ENCODE measurements at regions of chr1 and their contacts with region 1.

Region 1: GRCh38 chr1:59432531-59433439 is 135.9 kb downstream of the FGGY start:
- DNase-seq: no peak
- H3K4me3 Mint-ChIP-seq: no peak overlapping the region
- H3K27ac Mint-ChIP-seq: peak overlapping the region; percentile 83
- H3K4me1 Mint-ChIP-seq: peaks cover 47% of the 10 kb centered on the region
- H3K27me3 Mint-ChIP-seq: no peaks in the 10 kb centered on the region

Region 2: GRCh38 chr1:59007820-59008598 is 424.8 kb before region 1 on chr1:
- intact Hi-C with region 1: loop called (anchors 5 kb)
- DNase-seq: no peak
- H3K4me3 Mint-ChIP-seq: no peak overlapping the region
- H3K27ac Mint-ChIP-seq: peak overlapping the region; percentile 85
- H3K4me1 Mint-ChIP-seq: peaks cover 55% of the 10 kb centered on the region
- H3K27me3 Mint-ChIP-seq: no peaks in the 10 kb centered on the region

Region 3: DNA sequence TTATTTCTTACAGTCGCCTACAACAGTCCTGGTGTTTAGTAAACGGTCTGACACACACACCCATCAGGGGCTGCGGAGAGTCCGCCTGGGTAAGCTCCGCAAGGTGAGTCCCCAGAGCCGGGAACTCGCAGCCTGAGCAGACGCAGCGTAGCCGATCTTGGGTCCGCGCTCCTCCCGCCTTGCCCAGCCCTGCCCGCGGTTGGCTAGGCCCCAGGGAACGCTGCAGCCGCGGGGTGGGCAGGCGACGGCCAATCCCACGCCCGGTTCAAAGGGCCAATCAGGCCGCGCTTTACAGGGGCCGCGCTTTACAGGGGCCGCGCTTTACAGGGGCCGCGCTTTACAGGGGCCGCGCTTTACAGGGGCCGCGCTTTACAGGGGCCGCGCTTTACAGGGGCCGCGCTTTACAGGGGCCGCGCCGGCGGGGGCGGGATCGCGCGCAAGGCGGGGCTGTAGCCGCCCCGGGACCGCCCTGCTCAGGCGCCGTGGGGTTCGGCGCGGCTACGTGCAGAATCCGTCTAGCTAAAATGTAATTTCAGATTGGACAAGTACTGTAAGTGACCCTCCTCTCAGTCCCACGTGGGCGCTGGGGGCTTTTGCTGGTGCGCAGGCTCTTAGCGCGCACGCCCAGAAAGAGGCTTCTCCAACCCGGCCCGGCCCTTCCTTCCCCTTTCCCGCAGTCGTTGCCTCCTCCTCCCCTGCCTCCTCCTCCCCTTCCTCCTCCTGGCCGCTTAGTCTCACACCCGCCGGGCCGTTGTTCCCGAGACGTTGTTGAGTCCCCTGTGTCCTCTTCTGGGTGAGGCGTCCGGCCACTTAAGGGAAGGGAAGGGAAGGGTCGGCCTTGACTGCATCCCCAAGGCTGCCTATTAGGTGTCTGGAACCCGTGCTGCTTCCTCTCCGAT is 136.2 kb before region 1 on chr1 and contains the start of gene FGGY:
- intact Hi-C with region 1: loop called (anchors 1 kb)
- DNase-seq: peak; percentile 85
- H3K4me3 Mint-ChIP-seq: peak within 1 kb of the TSS; percentile 93
- H3K27ac Mint-ChIP-seq: peak within 1 kb of the TSS; percentile 88
- H3K4me1 Mint-ChIP-seq: peaks cover 36% of the 10 kb centered on the region
- H3K27me3 Mint-ChIP-seq: no peaks in the 10 kb centered on the region
- total RNA-seq, gene FGGY: 10.5 and 13.4 TPM in 2 replicates

Region 4: GRCh38 chr1:59354709-59355337 is 78.0 kb before region 1 on chr1:
- intact Hi-C with region 1: loop called (anchors 1 kb)
- DNase-seq: no peak
- H3K4me3 Mint-ChIP-seq: peak overlapping the region; percentile 32
- H3K27ac Mint-ChIP-seq: peak overlapping the region; percentile 95
- H3K4me1 Mint-ChIP-seq: peaks cover 37% of the 10 kb centered on the region
- H3K27me3 Mint-ChIP-seq: no peaks in the 10 kb centered on the region

Region 5: GRCh38 chr1:59455206-59455605 is 22.4 kb after region 1 on chr1:
- intact Hi-C with region 1: no loop called
- DNase-seq: no peak
- H3K4me3 Mint-ChIP-seq: no peak overlapping the region
- H3K27ac Mint-ChIP-seq: no peak overlapping the region
- H3K4me1 Mint-ChIP-seq: peaks cover 10% of the 10 kb centered on the region
- H3K27me3 Mint-ChIP-seq: no peaks in the 10 kb centered on the region

Region 6: DNA sequence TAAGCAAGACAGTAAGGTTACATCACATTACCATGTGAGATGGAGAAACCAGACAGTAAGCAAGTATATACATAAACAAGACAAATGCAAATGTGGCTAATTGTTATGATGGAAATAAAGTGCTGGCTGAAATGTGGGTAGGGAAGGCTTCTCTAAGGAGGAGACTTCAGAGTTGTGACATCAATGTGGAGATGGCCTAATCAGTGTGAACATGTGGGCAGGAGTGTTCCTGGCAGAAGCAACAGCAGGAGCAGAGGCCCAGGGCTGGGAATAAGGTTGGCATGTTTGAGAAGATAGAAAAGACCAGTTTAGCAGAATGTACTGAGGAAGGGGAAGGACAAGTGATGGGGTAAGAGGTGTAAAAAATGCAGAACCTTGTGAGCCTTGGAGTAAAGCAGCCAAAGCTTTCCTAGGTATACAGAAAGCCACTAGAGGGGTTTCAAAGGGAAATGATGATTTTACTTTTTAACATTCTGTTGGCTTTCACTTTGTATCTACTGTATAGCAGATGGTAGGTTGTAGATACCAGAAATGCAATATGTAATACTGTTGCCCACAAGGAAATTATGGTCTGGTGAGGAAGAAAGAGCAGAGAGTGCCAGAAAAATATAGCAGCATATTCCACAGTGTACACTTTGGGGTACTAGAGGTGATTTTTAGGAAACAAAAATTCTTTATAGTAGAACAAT is 61.5 kb after region 1 on chr1:
- intact Hi-C with region 1: no loop called
- DNase-seq: no peak
- H3K4me3 Mint-ChIP-seq: no peak overlapping the region
- H3K27ac Mint-ChIP-seq: peak overlapping the region; percentile 70
- H3K4me1 Mint-ChIP-seq: peaks cover 12% of the 10 kb centered on the region
- H3K27me3 Mint-ChIP-seq: no peaks in the 10 kb centered on the region

Region 7: DNA sequence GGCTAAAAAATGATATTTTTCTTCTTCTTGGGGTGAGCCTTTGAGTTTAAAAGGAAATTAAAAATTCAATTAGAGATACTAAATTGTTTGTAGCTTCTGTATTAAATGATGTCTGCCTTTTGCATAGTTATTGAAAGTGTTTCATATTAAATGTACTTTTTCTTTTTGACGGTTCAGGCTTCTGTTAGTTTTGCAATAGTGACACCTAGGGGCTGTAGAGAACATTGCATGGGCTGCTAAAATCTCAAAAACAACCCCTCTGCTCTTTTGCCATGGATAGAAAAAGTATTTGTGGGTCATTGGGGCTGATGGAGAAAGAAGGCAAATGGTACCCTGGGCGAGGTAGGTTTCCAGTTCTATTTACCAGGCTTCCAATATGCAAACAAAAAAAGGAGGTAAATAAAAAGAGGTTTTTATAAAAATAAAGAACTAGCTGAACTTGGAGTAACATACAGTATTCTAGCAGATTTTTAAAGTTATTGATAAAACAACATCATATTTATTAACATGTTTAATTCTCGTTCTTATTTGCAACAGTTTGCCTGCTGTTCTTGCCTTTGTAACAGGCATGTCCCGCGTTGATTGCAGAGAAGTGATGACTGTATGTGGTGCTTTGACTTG is 266.6 kb after region 1 on chr1:
- intact Hi-C with region 1: loop called (anchors 1 kb)
- DNase-seq: peak; percentile 13
- H3K4me3 Mint-ChIP-seq: no peak overlapping the region
- H3K27ac Mint-ChIP-seq: no peak overlapping the region
- H3K4me1 Mint-ChIP-seq: peaks cover 26% of the 10 kb centered on the region
- H3K27me3 Mint-ChIP-seq: no peaks in the 10 kb centered on the region